Testis (tissue), 5 donors: ENCODE measurements at regions of chr5 and their contacts with region 1.

Region 1: GRCh38 chr5:32241034-32241783 is 67.1 kb upstream of the GOLPH3 start:
- DNase-seq: peak; percentile 74
- H3K4me3 ChIP-seq: no peak overlapping the region
- H3K27ac ChIP-seq: peak overlapping the region; percentile 35 to 36
- H3K4me1 ChIP-seq: peaks cover 27% of the 10 kb centered on the region
- H3K27me3 ChIP-seq: no peaks in the 10 kb centered on the region
- CTCF ChIP-seq: no peak
- POLR2A ChIP-seq: no peak

Region 2: DNA sequence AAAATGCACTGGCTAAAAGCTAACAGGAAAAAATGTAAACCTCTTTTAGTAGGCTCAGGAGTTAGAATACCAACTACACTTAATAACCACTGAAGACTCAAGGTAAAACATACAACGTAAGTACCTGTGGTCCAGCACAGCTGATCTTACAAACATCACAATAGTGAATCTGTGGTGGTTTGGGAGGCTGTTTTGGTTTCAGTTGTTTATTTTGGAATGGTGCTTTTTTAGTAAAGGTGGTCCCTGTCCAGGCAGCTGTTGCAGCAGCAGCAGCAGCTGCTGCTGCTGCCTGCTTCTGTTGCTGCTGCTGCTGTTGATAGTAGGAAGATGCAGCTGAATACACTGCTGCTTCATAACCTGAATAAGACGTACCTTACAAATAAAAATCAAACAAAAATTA is 165.4 kb after region 1 on chr5:
- intact Hi-C with region 1: no loop called
- DNase-seq: no peak
- H3K4me3 ChIP-seq: no peak overlapping the region
- H3K27ac ChIP-seq: no peak overlapping the region
- H3K4me1 ChIP-seq: peaks cover 8% of the 10 kb centered on the region
- H3K27me3 ChIP-seq: no peaks in the 10 kb centered on the region
- CTCF ChIP-seq: no peak
- POLR2A ChIP-seq: no peak

Region 3: GRCh38 chr5:32613050-32613672 is 372.0 kb after region 1 on chr5:
- intact Hi-C with region 1: loop called (anchors 10 kb)
- DNase-seq: peak; percentile 93
- H3K4me3 ChIP-seq: no peak overlapping the region
- H3K27ac ChIP-seq: no peak overlapping the region
- H3K4me1 ChIP-seq: peaks cover 12% of the 10 kb centered on the region
- H3K27me3 ChIP-seq: no peaks in the 10 kb centered on the region
- CTCF ChIP-seq: peak; percentile 74 to 96 (median 92)
- POLR2A ChIP-seq: no peak